CD8-positive, alpha-beta T cell (primary cell): ENCODE measurements at regions of chr13 and their contacts with region 1.

Region 1: DNA sequence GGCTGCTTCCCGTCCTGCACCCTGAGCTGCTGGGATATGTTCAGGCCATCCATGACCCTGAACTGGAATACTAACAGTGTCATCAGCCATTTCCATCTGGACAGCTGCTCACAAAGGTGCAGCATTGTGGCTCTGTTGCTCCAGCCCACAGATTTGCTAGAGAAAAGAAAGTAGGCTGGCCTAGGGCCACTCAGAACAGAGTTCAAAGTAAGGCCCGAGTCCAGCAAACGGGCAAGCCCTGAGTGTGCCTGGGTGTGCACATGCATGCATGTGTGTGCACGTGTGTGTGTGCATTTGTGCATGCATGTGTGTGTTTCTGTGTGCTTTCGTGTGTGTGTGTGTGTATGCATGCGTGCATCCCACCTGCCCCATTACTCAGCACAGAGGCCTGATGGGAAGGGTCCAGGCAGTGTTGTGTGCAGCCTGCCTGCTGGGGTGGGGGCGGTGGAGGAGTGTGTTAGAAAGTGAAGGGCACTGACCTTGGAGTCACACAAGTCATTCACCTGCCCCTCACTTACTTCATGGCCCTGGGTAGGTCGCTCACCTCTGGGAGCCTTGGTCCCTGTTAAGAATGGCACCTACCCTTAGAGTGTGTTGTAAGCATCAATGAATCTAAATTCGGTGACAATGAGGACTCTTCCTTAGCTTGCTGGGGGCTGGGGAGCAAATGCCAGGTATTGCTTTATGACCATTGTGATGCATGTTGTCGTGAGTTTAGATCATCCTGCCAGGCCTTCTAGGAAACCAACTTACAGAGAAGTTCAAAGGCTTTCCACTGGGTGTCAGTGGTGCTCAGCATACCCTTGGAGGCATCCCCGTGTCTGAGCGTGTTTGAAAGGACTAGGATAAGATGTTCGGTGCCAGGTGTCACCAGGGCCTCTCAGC is 53.2 kb downstream of the GPR12 start:
- DNase-seq: peak in 6 of 9 experiments; percentile 19 to 70 (median 49)
- ATAC-seq: peak; percentile 79
- H3K4me3 ChIP-seq: no peak overlapping the region
- H3K4me3 Mint-ChIP-seq: no peak overlapping the region
- H3K27ac ChIP-seq: no peak overlapping the region
- H3K27ac Mint-ChIP-seq: no peak overlapping the region
- H3K4me1 ChIP-seq: no peaks in the 10 kb centered on the region
- H3K4me1 Mint-ChIP-seq: peaks cover 6% of the 10 kb centered on the region
- H3K27me3 ChIP-seq: no peaks in the 10 kb centered on the region
- H3K27me3 Mint-ChIP-seq: peaks cover 7% of the 10 kb centered on the region
- CTCF ChIP-seq: peak; percentile 58

Region 2: GRCh38 chr13:26646603-26647002 is 60.8 kb before region 1 on chr13:
- CTCF ChIA-PET with region 1: no interaction called
- POLR2A ChIA-PET with region 1: no interaction called
- intact Hi-C with region 1: no loop called
- DNase-seq: no peak
- ATAC-seq: no peak
- H3K4me3 ChIP-seq: no peak overlapping the region
- H3K4me3 Mint-ChIP-seq: no peak overlapping the region
- H3K27ac ChIP-seq: no peak overlapping the region
- H3K27ac Mint-ChIP-seq: no peak overlapping the region
- H3K4me1 ChIP-seq: no peaks in the 10 kb centered on the region
- H3K4me1 Mint-ChIP-seq: no peaks in the 10 kb centered on the region
- H3K27me3 ChIP-seq: no peaks in the 10 kb centered on the region
- H3K27me3 Mint-ChIP-seq: peaks cover 17% of the 10 kb centered on the region
- CTCF ChIP-seq: no peak

Region 3: GRCh38 chr13:26682606-26683005 is 24.8 kb before region 1 on chr13:
- CTCF ChIA-PET with region 1: no interaction called
- POLR2A ChIA-PET with region 1: no interaction called
- intact Hi-C with region 1: no loop called
- DNase-seq: no peak
- ATAC-seq: no peak
- H3K4me3 ChIP-seq: no peak overlapping the region
- H3K4me3 Mint-ChIP-seq: no peak overlapping the region
- H3K27ac ChIP-seq: no peak overlapping the region
- H3K27ac Mint-ChIP-seq: no peak overlapping the region
- H3K4me1 ChIP-seq: no peaks in the 10 kb centered on the region
- H3K4me1 Mint-ChIP-seq: no peaks in the 10 kb centered on the region
- H3K27me3 ChIP-seq: no peaks in the 10 kb centered on the region
- H3K27me3 Mint-ChIP-seq: peaks cover 19% of the 10 kb centered on the region
- CTCF ChIP-seq: no peak

Region 4: DNA sequence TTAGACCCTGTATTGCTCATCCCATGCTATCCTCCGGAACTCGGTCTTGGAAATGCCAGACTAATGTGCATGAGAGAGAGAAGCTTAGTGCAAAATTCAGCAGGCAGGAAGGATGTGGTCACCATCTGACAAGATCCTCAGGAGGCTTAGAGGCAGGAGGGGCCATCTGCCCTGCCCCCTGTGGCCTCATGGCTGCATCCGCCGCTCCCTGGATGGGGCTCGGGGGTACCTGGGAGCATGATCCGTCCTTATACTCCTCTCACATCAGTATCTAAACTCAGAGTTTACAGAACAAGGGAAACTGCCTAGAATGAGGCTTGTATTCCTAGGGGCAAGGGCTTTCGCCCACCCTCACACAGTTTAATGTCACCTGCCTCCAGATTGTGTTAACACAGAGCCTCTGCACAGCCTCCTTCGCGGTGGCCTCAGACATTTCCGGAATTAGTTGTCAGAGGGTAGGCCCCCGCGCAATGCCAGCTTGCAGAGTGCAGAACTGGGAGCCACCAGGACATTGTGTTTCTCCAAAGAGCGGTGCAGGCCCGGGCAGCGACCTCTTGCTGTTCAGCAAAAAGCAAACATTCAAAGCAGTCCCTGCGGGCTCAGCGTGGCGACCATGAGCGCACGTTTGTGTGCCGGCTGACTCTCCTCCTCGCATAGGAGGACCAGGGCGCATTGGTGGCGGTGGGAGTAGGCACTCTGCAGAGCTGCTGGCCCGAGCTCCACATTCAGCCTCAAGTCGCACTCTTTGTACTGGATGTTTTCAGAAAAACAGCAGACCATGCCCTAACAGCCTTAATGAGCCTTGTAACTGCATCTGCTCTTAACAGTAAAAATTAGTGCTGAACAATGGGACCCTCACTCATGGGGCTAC is 14.1 kb after region 1 on chr13:
- CTCF ChIA-PET with region 1: interaction called, 21 read pairs
- POLR2A ChIA-PET with region 1: no interaction called
- intact Hi-C with region 1: no loop called
- DNase-seq: peak in 8 of 9 experiments; percentile 9 to 73 (median 36)
- ATAC-seq: peak; percentile 81
- H3K4me3 ChIP-seq: peak overlapping the region; percentile 39 to 57
- H3K4me3 Mint-ChIP-seq: peak overlapping the region; percentile 83
- H3K27ac ChIP-seq: peak overlapping the region; percentile 20 to 69
- H3K27ac Mint-ChIP-seq: peak overlapping the region; percentile 91
- H3K4me1 ChIP-seq: peaks cover 20% of the 10 kb centered on the region
- H3K4me1 Mint-ChIP-seq: peaks cover 24% of the 10 kb centered on the region
- H3K27me3 ChIP-seq: no peaks in the 10 kb centered on the region
- H3K27me3 Mint-ChIP-seq: no peaks in the 10 kb centered on the region
- CTCF ChIP-seq: no peak

Region 5: GRCh38 chr13:26785838-26786630 is 78.7 kb after region 1 on chr13:
- CTCF ChIA-PET with region 1: interaction called, 11 read pairs
- POLR2A ChIA-PET with region 1: no interaction called
- intact Hi-C with region 1: loop called in 1 of 2 experiments (anchors 5 kb)
- DNase-seq: peak in 8 of 9 experiments; percentile 25 to 79 (median 59)
- ATAC-seq: peak; percentile 92
- H3K4me3 ChIP-seq: peak overlapping the region; percentile 53 to 62
- H3K4me3 Mint-ChIP-seq: peak overlapping the region; percentile 81
- H3K27ac ChIP-seq: peak overlapping the region; percentile 21 to 29
- H3K27ac Mint-ChIP-seq: peak overlapping the region; percentile 67
- H3K4me1 ChIP-seq: peaks cover 15% of the 10 kb centered on the region
- H3K4me1 Mint-ChIP-seq: peaks cover 30% of the 10 kb centered on the region
- H3K27me3 ChIP-seq: no peaks in the 10 kb centered on the region
- H3K27me3 Mint-ChIP-seq: no peaks in the 10 kb centered on the region
- CTCF ChIP-seq: no peak

Region 6: GRCh38 chr13:26872525-26873385 is 165.4 kb after region 1 on chr13:
- CTCF ChIA-PET with region 1: interaction called, 59 read pairs
- POLR2A ChIA-PET with region 1: no interaction called
- intact Hi-C with region 1: loop called in 1 of 2 experiments (anchors 1 kb)
- DNase-seq: peak; percentile 3 to 63 (median 49)
- ATAC-seq: no peak
- H3K4me3 ChIP-seq: no peak overlapping the region
- H3K4me3 Mint-ChIP-seq: no peak overlapping the region
- H3K27ac ChIP-seq: no peak overlapping the region
- H3K27ac Mint-ChIP-seq: no peak overlapping the region
- H3K4me1 ChIP-seq: no peaks in the 10 kb centered on the region
- H3K4me1 Mint-ChIP-seq: no peaks in the 10 kb centered on the region
- H3K27me3 ChIP-seq: no peaks in the 10 kb centered on the region
- H3K27me3 Mint-ChIP-seq: peaks cover 5% of the 10 kb centered on the region
- CTCF ChIP-seq: peak; percentile 29

Region 7: DNA sequence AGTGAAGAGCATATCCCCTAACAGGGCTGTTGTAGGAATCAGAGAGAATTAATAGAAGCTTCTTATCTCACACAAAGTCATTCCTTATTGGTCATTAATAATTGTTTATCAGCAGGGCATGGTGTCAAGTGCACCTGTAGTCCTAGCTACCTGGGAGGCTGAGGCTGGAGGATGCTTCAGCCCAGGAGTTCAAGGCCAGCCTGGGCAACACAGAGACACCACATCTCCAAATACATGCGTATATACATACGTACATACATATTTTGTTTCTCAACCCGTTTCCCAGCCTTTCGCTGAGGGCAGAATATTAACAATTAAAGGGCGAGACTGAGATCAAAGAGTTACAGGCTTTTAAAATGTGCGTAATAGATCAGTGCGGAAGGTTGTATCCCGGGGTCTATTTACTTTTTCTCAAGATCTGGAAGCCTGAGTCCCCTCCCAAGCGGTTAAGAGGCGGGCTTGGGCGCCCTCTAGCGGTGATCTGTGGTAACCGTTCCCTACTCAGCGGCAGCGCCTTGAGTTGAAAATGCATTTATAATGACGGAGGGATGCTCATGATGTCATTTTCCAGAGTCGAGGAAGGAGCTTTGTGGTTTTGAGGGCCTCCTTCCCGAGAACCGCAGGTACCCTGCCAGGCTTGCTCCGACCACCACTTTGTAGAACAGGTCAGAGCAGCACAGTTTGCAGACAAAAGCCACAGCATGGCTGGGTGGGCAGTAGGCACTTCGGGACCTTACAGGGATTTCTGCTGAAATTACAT is 222.8 kb after region 1 on chr13:
- CTCF ChIA-PET with region 1: interaction called, 65 read pairs
- POLR2A ChIA-PET with region 1: no interaction called
- intact Hi-C with region 1: loop called in 1 of 2 experiments (anchors 1 kb)
- DNase-seq: peak; percentile 51 to 83 (median 64)
- ATAC-seq: peak; percentile 44
- H3K4me3 ChIP-seq: no peak overlapping the region
- H3K4me3 Mint-ChIP-seq: no peak overlapping the region
- H3K27ac ChIP-seq: no peak overlapping the region
- H3K27ac Mint-ChIP-seq: no peak overlapping the region
- H3K4me1 ChIP-seq: no peaks in the 10 kb centered on the region
- H3K4me1 Mint-ChIP-seq: peaks cover 3% of the 10 kb centered on the region
- H3K27me3 ChIP-seq: peaks cover 0 to 2% of the 10 kb centered on the region in 2 experiments
- H3K27me3 Mint-ChIP-seq: peaks cover 2% of the 10 kb centered on the region
- CTCF ChIP-seq: peak; percentile 96